ENCODE measurements at regions of chr2 and their contacts with region 1.

Region 1: GRCh38 chr2:85354286-85355072 is at the starts of genes ELMOD3 and RETSAT:
- DNase-seq: peak; percentile 100
- ATAC-seq: peak; percentile 98
- H3K4me3 ChIP-seq: peak within 1 kb of the TSS; percentile 89 to 93 (median 91)
- H3K27ac ChIP-seq: peak within 1 kb of the TSS; percentile 72
- H3K4me1 ChIP-seq: peaks cover 33% of the 10 kb centered on the region
- H3K27me3 ChIP-seq: no peaks in the 10 kb centered on the region; a peak in 1 of 5 replicates
- CTCF ChIP-seq: peak; percentile 13; the same call in 1 of the 2 replicates
- EP300 ChIP-seq: peak in 1 of 2 experiments; percentile 61; a peak in 1 of 4 replicates
- POLR2A ChIP-seq: peak; percentile 100
- RAD21 ChIP-seq: peak; percentile 67
- total RNA-seq, gene ELMOD3: 10.3 and 13.3 TPM in 2 replicates
- total RNA-seq, gene RETSAT: 17.2 and 46.7 TPM in 2 replicates

Region 2: DNA sequence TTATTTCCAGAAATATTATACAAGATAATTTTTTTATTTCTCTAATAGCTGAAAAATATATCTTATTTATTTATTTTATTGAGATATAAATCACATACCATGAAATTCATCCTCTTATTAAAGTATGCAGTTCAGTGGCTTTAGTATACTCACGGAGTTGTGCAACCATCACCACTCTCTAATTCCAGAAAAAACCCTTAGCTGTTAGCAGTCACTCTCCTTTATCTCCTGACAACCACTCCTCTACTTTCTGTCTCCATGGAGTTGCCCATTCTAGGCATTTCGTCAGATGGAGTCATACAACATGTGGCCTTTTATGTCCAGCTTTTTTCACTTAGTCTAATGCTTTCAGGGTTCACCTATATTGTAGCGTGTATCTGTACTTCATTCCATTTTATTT is 154.8 kb before region 1 on chr2:
- CTCF ChIA-PET with region 1: no interaction called
- POLR2A ChIA-PET with region 1: no interaction called
- in situ Hi-C with region 1: no loop called
- intact Hi-C with region 1: no loop called
- DNase-seq: no peak
- ATAC-seq: no peak
- H3K4me3 ChIP-seq: no peak overlapping the region
- H3K27ac ChIP-seq: no peak overlapping the region
- H3K4me1 ChIP-seq: no peaks in the 10 kb centered on the region
- H3K27me3 ChIP-seq: peaks cover 0 to 21% of the 10 kb centered on the region in 2 experiments; a peak in 2 of 5 replicates
- CTCF ChIP-seq: no peak
- EP300 ChIP-seq: no peak
- POLR2A ChIP-seq: no peak
- RAD21 ChIP-seq: no peak

Region 3: GRCh38 chr2:85308896-85309555 is 45.5 kb before region 1 on chr2:
- CTCF ChIA-PET with region 1: no interaction called
- POLR2A ChIA-PET with region 1: interaction called, 13 read pairs
- in situ Hi-C with region 1: no loop called
- intact Hi-C with region 1: no loop called
- DNase-seq: peak; percentile 46
- ATAC-seq: peak; percentile 59
- H3K4me3 ChIP-seq: peak overlapping the region; percentile 30 to 70 (median 37); a peak in 5 of 6 replicates
- H3K27ac ChIP-seq: peak overlapping the region; percentile 8
- H3K4me1 ChIP-seq: peaks cover 82% of the 10 kb centered on the region
- H3K27me3 ChIP-seq: no peaks in the 10 kb centered on the region
- CTCF ChIP-seq: 0 out of 2 replicates have a peak, but pooled peaks have one; percentile 2
- EP300 ChIP-seq: no peak
- POLR2A ChIP-seq: 0 out of 4 replicates have a peak, but pooled peaks of 1 of the 2 experiments have one; percentile 17
- RAD21 ChIP-seq: 0 out of 2 replicates have a peak, but pooled peaks have one; percentile 21

Region 4: GRCh38 chr2:85340034-85340892 is 14.2 kb before region 1 on chr2:
- CTCF ChIA-PET with region 1: no interaction called
- POLR2A ChIA-PET with region 1: interaction called, 21 read pairs
- in situ Hi-C with region 1: no loop called
- intact Hi-C with region 1: no loop called
- DNase-seq: no peak
- ATAC-seq: no peak
- H3K4me3 ChIP-seq: no peak overlapping the region
- H3K27ac ChIP-seq: no peak overlapping the region
- H3K4me1 ChIP-seq: 0 out of 2 replicates have a peak, but pooled peaks cover 3% of the 10 kb centered on the region
- H3K27me3 ChIP-seq: no peaks in the 10 kb centered on the region
- CTCF ChIP-seq: no peak
- EP300 ChIP-seq: no peak
- POLR2A ChIP-seq: no peak
- RAD21 ChIP-seq: no peak

Region 5: GRCh38 chr2:85369500-85369899 is 15.0 kb after region 1 on chr2:
- CTCF ChIA-PET with region 1: no interaction called
- POLR2A ChIA-PET with region 1: interaction called, 86 read pairs
- in situ Hi-C with region 1: no loop called
- intact Hi-C with region 1: loop called (anchors 1 kb)
- DNase-seq: no peak
- ATAC-seq: no peak
- H3K4me3 ChIP-seq: no peak overlapping the region
- H3K27ac ChIP-seq: no peak overlapping the region
- H3K4me1 ChIP-seq: peaks cover 48% of the 10 kb centered on the region
- H3K27me3 ChIP-seq: no peaks in the 10 kb centered on the region
- CTCF ChIP-seq: no peak
- EP300 ChIP-seq: no peak
- POLR2A ChIP-seq: no peak
- RAD21 ChIP-seq: no peak

Region 6: GRCh38 chr2:85551698-85552678 is 197.5 kb after region 1 on chr2:
- CTCF ChIA-PET with region 1: no interaction called
- POLR2A ChIA-PET with region 1: interaction called, 6 read pairs
- in situ Hi-C with region 1: no loop called
- intact Hi-C with region 1: loop called (anchors 1 kb)
- DNase-seq: peak; percentile 83
- ATAC-seq: peak; percentile 57
- H3K4me3 ChIP-seq: no peak overlapping the region
- H3K27ac ChIP-seq: no peak overlapping the region
- H3K4me1 ChIP-seq: peaks cover 4% of the 10 kb centered on the region
- H3K27me3 ChIP-seq: no peaks in the 10 kb centered on the region
- CTCF ChIP-seq: peak; percentile 96
- EP300 ChIP-seq: no peak
- POLR2A ChIP-seq: no peak; a peak in 1 of 4 replicates
- RAD21 ChIP-seq: peak; percentile 97